Naive thymus-derived CD4-positive, alpha-beta T cell (primary cell): ENCODE measurements at regions of chr2 and their contacts with region 1.

Region 1: GRCh38 chr2:27428213-27428977 is at the start of gene NRBP1:
- DNase-seq: peak; percentile 83 to 97 (median 88)
- ATAC-seq: peak; percentile 97
- H3K4me3 ChIP-seq: peak within 1 kb of the TSS; percentile 84
- H3K4me3 Mint-ChIP-seq: peak within 1 kb of the TSS; percentile 91 to 99 (median 98)
- H3K27ac ChIP-seq: peak within 1 kb of the TSS; percentile 94
- H3K27ac Mint-ChIP-seq: peak within 1 kb of the TSS; percentile 89 to 99 (median 97)
- H3K4me1 ChIP-seq: peaks cover 23 to 28% of the 10 kb centered on the region in 2 donors
- H3K4me1 Mint-ChIP-seq: peaks cover 32 to 48% (median 39%) of the 10 kb centered on the region in 7 donors
- H3K27me3 ChIP-seq: no peaks in the 10 kb centered on the region
- H3K27me3 Mint-ChIP-seq: peaks cover 0 to 3% (median 0%) of the 10 kb centered on the region in 5 donors
- total RNA-seq, gene NRBP1: 94.4 to 181 (median 121) TPM

Region 2: GRCh38 chr2:27211829-27212627 is 216.4 kb before region 1 on chr2 and contains the starts of genes ATRAID and SLC5A6:
- CTCF ChIA-PET with region 1: no interaction called
- POLR2A ChIA-PET with region 1: no interaction called
- intact Hi-C with region 1: loop called in 1 of 2 experiments (anchors 5 kb)
- DNase-seq: peak; percentile 86 to 93 (median 92)
- ATAC-seq: peak; percentile 93
- H3K4me3 ChIP-seq: peak within 1 kb of the TSS; percentile 91
- H3K4me3 Mint-ChIP-seq: peak within 1 kb of the TSS; percentile 89 to 100 (median 99)
- H3K27ac ChIP-seq: peak within 1 kb of the TSS; percentile 100
- H3K27ac Mint-ChIP-seq: peak within 1 kb of the TSS; percentile 99 to 100 (median 100)
- H3K4me1 ChIP-seq: peaks cover 14 to 17% of the 10 kb centered on the region in 2 donors
- H3K4me1 Mint-ChIP-seq: peaks cover 18 to 49% (median 42%) of the 10 kb centered on the region in 7 donors
- H3K27me3 ChIP-seq: no peaks in the 10 kb centered on the region
- H3K27me3 Mint-ChIP-seq: no peaks in the 10 kb centered on the region
- total RNA-seq, gene ATRAID: 71.0 to 113 (median 90.7) TPM
- total RNA-seq, gene SLC5A6: 25.6 to 203 (median 44.3) TPM

Region 3: GRCh38 chr2:27380626-27381545 is 47.5 kb before region 1 on chr2 and contains the start of gene ZNF513:
- CTCF ChIA-PET with region 1: no interaction called
- POLR2A ChIA-PET with region 1: interaction called, 17 read pairs
- intact Hi-C with region 1: loop called (anchors 2 kb)
- DNase-seq: peak; percentile 71 to 88 (median 81)
- ATAC-seq: peak; percentile 97
- H3K4me3 ChIP-seq: peak within 1 kb of the TSS; percentile 67
- H3K4me3 Mint-ChIP-seq: peak within 1 kb of the TSS; percentile 85 to 94 (median 90)
- H3K27ac ChIP-seq: peak within 1 kb of the TSS; percentile 85
- H3K27ac Mint-ChIP-seq: peak within 1 kb of the TSS; percentile 88 to 97 (median 94)
- H3K4me1 ChIP-seq: peaks cover 9 to 10% of the 10 kb centered on the region in 2 donors
- H3K4me1 Mint-ChIP-seq: peaks cover 18 to 33% (median 30%) of the 10 kb centered on the region in 7 donors
- H3K27me3 ChIP-seq: no peaks in the 10 kb centered on the region
- H3K27me3 Mint-ChIP-seq: no peaks in the 10 kb centered on the region
- total RNA-seq, gene ZNF513: 15.6 to 23.2 (median 19.2) TPM

Region 4: DNA sequence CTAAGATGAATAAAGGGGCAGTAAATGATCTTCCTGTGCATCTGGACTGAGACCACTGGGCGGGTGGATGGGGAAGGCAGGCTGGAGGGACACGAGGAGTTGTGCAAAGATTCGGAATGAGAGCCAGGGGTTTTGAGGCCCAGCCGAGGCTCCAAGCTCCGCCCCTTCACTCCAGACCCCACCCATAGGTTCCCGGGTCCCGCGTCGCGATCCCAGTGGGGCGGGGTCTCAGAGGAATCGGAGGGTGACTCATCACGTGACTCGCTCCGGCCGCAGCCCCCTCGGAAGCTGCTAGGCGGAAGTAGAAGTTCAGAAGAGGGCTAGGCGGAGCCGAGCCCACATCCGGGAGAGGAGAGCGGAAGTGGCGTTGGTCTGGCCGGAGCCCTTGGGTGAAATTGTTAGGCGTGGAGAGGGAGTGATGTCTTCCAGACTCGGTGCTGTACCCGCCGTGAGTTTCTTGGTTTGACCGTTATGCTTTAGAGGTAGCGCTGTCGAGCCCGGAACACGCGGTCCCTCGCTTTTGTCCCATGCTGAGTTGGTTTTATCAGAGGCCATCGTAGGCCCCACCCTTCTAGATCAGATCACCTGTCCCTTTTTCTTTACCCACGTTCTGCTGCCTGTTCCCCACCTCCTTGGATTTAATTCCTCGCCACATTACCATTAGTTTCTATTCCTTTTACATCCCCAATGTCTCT is 154.4 kb after region 1 on chr2 and contains the start of gene ZNF512:
- CTCF ChIA-PET with region 1: no interaction called
- POLR2A ChIA-PET with region 1: no interaction called
- intact Hi-C with region 1: loop called (anchors 2 to 5 kb)
- DNase-seq: peak; percentile 44 to 76 (median 70)
- ATAC-seq: peak; percentile 92
- H3K4me3 ChIP-seq: peak within 1 kb of the TSS; percentile 75
- H3K4me3 Mint-ChIP-seq: peak within 1 kb of the TSS; percentile 90 to 100 (median 95)
- H3K27ac ChIP-seq: peak within 1 kb of the TSS; percentile 84
- H3K27ac Mint-ChIP-seq: peak within 1 kb of the TSS; percentile 85 to 98 (median 94)
- H3K4me1 ChIP-seq: peaks cover 22 to 35% of the 10 kb centered on the region in 2 donors
- H3K4me1 Mint-ChIP-seq: peaks cover 37 to 60% (median 53%) of the 10 kb centered on the region in 7 donors
- H3K27me3 ChIP-seq: no peaks in the 10 kb centered on the region
- H3K27me3 Mint-ChIP-seq: peaks cover 0 to 16% (median 0%) of the 10 kb centered on the region in 5 donors
- total RNA-seq, gene ZNF512: 26.6 to 64.6 (median 50.1) TPM

Region 5: GRCh38 chr2:27683390-27684071 is 255.1 kb after region 1 on chr2:
- CTCF ChIA-PET with region 1: interaction called, 5 read pairs
- POLR2A ChIA-PET with region 1: interaction called, 3 read pairs
- intact Hi-C with region 1: loop called in 1 of 2 experiments (anchors 1 kb)
- DNase-seq: peak; percentile 54 to 90 (median 82)
- ATAC-seq: peak; percentile 98
- H3K4me3 ChIP-seq: no peak overlapping the region
- H3K4me3 Mint-ChIP-seq: peak overlapping the region in 1 of 10 donors; percentile 35
- H3K27ac ChIP-seq: no peak overlapping the region
- H3K27ac Mint-ChIP-seq: peak overlapping the region; percentile 35 to 78 (median 66)
- H3K4me1 ChIP-seq: peaks cover 0 to 28% of the 10 kb centered on the region in 2 donors
- H3K4me1 Mint-ChIP-seq: peaks cover 5 to 25% (median 13%) of the 10 kb centered on the region in 7 donors
- H3K27me3 ChIP-seq: no peaks in the 10 kb centered on the region
- H3K27me3 Mint-ChIP-seq: no peaks in the 10 kb centered on the region